Cardiac septum (tissue), 1 donor: ENCODE measurements at regions of chr11 and their contacts with region 1.

Region 1: GRCh38 chr11:59822989-59823566 is 12.5 kb upstream of the MRPL16 start:
- DNase-seq: no peak

Region 2: GRCh38 chr11:60130496-60130895 is 307.4 kb after region 1 on chr11:
- intact Hi-C with region 1: loop called (anchors 5 kb)
- DNase-seq: no peak

Region 3: GRCh38 chr11:60193687-60194433 is 370.8 kb after region 1 on chr11:
- intact Hi-C with region 1: loop called (anchors 2 kb)
- DNase-seq: no peak

Region 4: GRCh38 chr11:60251485-60252212 is 428.6 kb after region 1 on chr11:
- intact Hi-C with region 1: loop called (anchors 5 kb)
- DNase-seq: no peak